CD4-positive, alpha-beta T cell (primary cell): ENCODE measurements at regions of chr2 and their contacts with region 1.

Region 1: DNA sequence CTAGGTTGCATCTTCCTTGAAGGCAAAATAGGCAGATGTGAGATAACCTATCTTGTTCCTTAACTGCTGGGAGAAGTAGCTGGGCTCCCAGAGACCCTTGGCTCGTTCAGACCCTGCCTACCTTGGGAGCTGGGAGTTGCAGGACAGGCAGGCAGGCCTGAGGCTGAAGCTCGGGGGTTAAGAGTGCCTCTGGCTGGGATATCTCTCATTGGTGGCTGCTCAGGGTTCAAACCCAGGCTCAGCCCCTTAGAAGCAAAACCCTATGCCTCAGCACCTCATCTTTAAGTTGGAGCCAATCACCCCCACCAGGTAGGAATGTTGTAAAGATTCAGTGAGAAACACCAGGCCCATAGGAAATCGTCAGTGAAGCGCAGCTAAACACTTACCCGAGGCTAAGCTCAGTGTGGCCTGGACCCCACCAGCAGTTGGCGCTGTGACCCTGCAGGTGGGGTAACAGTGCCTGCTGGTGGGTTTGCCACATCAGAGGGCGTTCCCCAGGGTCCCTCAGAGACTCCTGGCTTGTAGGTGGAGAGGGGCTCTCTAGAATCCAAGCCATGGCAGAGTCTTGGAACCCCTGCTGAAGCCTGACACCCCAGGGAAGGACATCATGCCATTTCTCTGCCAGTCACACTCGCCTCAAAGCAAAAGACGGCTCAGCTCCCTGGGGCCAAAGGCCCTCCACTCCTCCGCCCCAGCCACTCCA is 54.6 kb upstream of the GPR17 start:
- DNase-seq: peak; percentile 45 to 83 (median 61)
- ATAC-seq: peak; percentile 99
- H3K4me3 ChIP-seq: no peak overlapping the region
- H3K4me3 Mint-ChIP-seq: no peak overlapping the region
- H3K27ac ChIP-seq: no peak overlapping the region
- H3K27ac Mint-ChIP-seq: no peak overlapping the region
- H3K4me1 ChIP-seq: peaks cover 5% of the 10 kb centered on the region
- H3K4me1 Mint-ChIP-seq: peaks cover 16% of the 10 kb centered on the region
- H3K27me3 ChIP-seq: no peaks in the 10 kb centered on the region
- H3K27me3 Mint-ChIP-seq: no peaks in the 10 kb centered on the region
- CTCF ChIP-seq: peak; percentile 80

Region 2: DNA sequence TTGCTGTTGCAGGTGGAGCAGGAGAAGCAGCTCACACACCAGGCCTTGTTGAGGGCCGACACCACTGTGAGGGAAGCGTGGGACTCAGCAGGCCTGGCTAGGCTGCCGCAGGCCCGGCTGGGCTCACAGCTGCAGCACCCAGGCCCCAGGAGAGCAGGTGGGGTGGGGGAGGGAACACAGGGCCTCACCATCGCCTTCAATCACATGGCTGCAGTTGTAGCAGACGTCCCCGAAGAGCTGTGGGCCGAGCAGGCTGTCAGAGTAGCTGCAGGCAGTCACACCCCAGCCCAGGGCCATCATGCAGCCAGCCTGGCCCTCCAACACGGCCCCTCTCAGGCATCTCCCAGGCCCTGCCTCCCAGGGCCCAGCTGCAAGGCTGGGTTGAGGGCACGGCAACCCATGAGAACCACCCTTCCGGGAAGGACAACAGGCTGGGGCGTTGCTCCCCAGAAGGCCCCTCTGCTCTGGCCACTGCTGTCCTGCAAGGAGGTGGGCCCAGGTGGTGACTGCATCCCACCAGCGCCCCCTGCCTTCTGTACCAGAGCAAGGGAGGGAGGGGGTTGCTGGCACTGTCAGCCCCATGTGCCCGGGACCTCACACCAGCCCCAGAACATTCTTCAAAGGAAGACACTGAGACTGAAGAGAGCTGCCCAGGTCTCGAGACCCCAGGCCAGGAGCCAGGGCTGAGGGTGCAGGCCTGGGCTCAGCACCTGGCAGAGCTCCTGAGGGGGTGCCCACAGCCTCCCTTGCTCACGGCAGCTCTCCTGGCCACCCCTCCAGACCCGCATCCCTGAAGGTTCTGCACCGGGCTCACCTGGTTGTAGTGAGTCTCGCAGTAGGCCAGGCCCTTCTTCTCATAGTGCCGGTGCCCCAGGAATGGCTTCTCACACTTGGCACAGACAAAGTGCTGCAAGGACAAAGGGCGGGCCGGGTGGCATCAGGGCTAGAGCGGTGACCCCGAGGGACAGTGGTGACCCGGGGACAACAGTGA is 49.0 kb after region 1 on chr2:
- CTCF ChIA-PET with region 1: interaction called, 12 read pairs
- POLR2A ChIA-PET with region 1: interaction called, 3 read pairs
- intact Hi-C with region 1: no loop called
- DNase-seq: peak in 9 of 14 experiments; percentile 9 to 59 (median 33)
- ATAC-seq: peak; percentile 24
- H3K4me3 ChIP-seq: peak overlapping the region; percentile 63
- H3K4me3 Mint-ChIP-seq: peak overlapping the region; percentile 79
- H3K27ac ChIP-seq: peak overlapping the region; percentile 68 to 75
- H3K27ac Mint-ChIP-seq: peak overlapping the region; percentile 94
- H3K4me1 ChIP-seq: peaks cover 81% of the 10 kb centered on the region
- H3K4me1 Mint-ChIP-seq: peaks cover 86% of the 10 kb centered on the region
- H3K27me3 ChIP-seq: no peaks in the 10 kb centered on the region
- H3K27me3 Mint-ChIP-seq: no peaks in the 10 kb centered on the region
- CTCF ChIP-seq: peak; percentile 31